Ovary (tissue), 10 donors: ENCODE measurements at regions of chr12 and their contacts with region 1.

Region 1: GRCh38 chr12:11592484-11592883 is 57.0 kb upstream of the ETV6 start:
- DNase-seq: no peak
- H3K4me3 ChIP-seq: no peak overlapping the region
- H3K27ac ChIP-seq: no peak overlapping the region
- H3K4me1 ChIP-seq: no peaks in the 10 kb centered on the region
- H3K27me3 ChIP-seq: no peaks in the 10 kb centered on the region
- CTCF ChIP-seq: no peak
- EP300 ChIP-seq: no peak
- POLR2A ChIP-seq: no peak

Region 2: DNA sequence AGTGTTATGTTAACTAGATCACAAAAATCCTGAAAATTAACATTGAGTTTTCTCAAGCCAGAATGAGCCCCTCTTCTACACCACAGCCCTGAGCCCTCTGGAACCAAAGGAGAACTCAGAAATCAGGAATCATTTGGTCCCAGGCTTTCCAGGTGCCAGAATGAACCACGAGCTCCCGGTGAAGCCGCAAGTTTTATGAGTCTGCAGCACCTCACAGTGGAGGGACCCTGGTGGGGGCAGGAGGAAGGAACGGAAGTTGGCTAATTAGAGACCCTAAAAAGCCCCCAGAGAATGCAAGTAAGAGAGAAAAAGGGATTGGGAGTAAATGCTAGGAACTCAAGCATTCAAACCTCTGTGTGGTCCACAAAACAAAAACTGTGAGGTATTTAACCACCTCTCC is 425.3 kb after region 1 on chr12:
- intact Hi-C with region 1: loop called in 1 of 4 experiments (anchors 5 kb)
- DNase-seq: no peak
- H3K4me3 ChIP-seq: no peak overlapping the region
- H3K27ac ChIP-seq: no peak overlapping the region
- H3K4me1 ChIP-seq: no peaks in the 10 kb centered on the region
- H3K27me3 ChIP-seq: no peaks in the 10 kb centered on the region
- CTCF ChIP-seq: no peak
- EP300 ChIP-seq: no peak
- POLR2A ChIP-seq: no peak